HEK293 (cell line): ENCODE measurements at regions of chr9 and their contacts with region 1.

Region 1: GRCh38 chr9:127734747-127735529 is at the start of gene TOR2A:
- H3K4me3 ChIP-seq: peak within 1 kb of the TSS; percentile 70
- H3K27ac ChIP-seq: peak within 1 kb of the TSS; percentile 75
- H3K4me1 ChIP-seq: no peaks in the 10 kb centered on the region
- CTCF ChIP-seq: peak; percentile 93

Region 2: GRCh38 chr9:127450830-127451724 is 283.9 kb before region 1 on chr9 and contains the starts of genes LRSAM1 and RPL12:
- CTCF ChIA-PET with region 1: interaction called, 10 read pairs
- POLR2A ChIA-PET with region 1: interaction called, 4 read pairs
- H3K4me3 ChIP-seq: peak within 1 kb of the TSS; percentile 90
- H3K27ac ChIP-seq: peak within 1 kb of the TSS; percentile 98
- H3K4me1 ChIP-seq: no peaks in the 10 kb centered on the region
- CTCF ChIP-seq: no peak

Region 3: DNA sequence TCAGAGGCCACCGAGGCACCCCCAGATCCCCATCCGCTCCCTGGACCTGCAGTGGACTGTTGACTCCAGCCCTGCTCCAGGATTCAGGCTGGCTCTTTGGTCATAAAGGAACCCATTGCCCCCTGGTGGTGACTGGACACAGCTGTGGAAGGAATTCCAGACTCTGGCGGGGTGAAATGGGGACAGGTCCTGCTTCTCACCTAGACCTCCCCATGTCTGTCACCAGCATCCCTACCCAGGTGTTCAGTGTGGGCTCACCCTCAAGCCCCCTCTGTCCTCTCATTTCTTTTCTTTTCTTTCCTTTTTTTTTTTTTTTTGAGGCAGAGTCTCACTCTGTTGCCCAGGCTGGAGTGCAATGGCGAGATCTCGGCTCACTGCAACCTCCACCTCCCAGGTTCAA is 148.4 kb before region 1 on chr9:
- CTCF ChIA-PET with region 1: interaction called, 72 read pairs
- POLR2A ChIA-PET with region 1: interaction called, 11 read pairs
- H3K4me3 ChIP-seq: no peak overlapping the region
- H3K27ac ChIP-seq: no peak overlapping the region
- H3K4me1 ChIP-seq: no peaks in the 10 kb centered on the region
- CTCF ChIP-seq: peak; percentile 72; the same call in 1 of the 2 replicates

Region 4: GRCh38 chr9:127611899-127612790 is 122.8 kb before region 1 on chr9 and contains the start of gene STXBP1:
- CTCF ChIA-PET with region 1: interaction called, 10 read pairs
- POLR2A ChIA-PET with region 1: interaction called, 14 read pairs
- H3K4me3 ChIP-seq: peak within 1 kb of the TSS; percentile 78
- H3K27ac ChIP-seq: peak within 1 kb of the TSS; percentile 46; the same call in 1 of the 2 replicates
- H3K4me1 ChIP-seq: peaks cover 13% of the 10 kb centered on the region
- CTCF ChIP-seq: peak; percentile 43; the same call in 1 of the 2 replicates

Region 5: DNA sequence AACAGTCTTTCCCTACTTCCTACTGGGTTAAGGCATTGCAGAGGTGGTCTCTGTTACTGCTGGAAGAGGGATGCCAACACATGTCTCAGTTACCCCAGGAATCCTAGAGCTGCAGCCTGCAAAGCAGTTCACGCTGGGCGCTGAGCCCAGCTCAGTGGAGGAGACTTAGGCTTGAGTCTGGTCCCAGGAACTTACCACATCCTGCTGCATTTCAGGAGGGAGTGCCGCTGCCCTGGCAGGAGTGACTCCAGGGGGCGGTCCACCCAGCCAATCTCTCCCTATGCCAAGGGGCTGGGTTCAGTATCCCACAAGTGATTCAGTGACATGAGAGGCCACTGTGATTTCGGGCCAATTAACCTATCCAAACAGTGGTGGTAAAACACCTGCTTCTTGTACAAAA is 11.5 kb before region 1 on chr9:
- CTCF ChIA-PET with region 1: interaction called, 12 read pairs
- POLR2A ChIA-PET with region 1: interaction called, 3 read pairs
- H3K4me3 ChIP-seq: no peak overlapping the region
- H3K27ac ChIP-seq: no peak overlapping the region
- H3K4me1 ChIP-seq: no peaks in the 10 kb centered on the region
- CTCF ChIP-seq: no peak

Region 6: DNA sequence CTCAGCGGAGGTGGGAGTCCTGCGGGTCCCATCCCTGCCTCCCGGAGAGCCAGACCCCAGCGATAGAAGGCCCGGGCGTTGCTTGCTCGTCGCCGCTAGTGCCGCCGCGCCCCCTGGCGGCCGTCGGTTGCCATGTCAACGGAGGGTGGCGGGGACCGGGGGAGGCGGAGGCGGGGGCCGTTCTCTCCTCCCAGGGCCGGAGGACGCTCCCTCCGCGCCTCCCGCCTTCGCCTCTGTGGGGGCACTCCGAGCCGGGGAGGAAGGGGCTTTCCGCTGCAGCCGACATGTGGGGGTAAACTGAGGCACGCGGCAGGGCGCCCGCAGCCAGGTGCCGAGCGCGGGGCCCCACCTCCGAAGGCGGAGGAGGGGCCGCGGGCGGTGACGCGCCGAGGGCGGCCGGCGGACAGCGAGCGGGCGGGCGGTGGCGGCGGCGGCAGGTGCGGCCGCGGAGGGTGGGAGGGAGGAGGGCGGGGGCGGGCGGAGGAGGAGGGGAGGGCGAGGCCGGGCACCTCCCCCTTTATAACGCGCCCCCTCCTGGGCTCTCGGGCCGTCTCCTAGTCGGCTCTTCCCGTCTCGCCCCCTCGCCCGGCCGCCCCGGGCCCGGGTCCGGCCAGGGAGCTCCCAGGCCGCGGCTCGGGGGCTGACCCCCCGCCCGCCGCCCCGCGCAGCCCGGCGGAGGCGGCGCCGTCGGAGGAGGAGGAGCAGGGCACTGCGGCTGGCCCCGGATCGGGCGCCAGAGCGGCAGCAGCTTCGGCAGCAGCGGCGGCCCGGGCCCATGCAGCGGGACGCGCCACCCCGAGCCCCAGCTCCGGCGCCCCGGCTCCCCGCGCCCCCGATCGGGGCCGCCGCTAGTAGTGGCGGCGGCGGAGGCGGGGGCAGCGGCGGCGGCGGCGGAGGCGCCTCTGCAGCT is 50.3 kb after region 1 on chr9:
- CTCF ChIA-PET with region 1: interaction called, 44 read pairs
- POLR2A ChIA-PET with region 1: interaction called, 16 read pairs
- H3K4me3 ChIP-seq: peak overlapping the region; percentile 67
- H3K27ac ChIP-seq: peak overlapping the region; percentile 95
- H3K4me1 ChIP-seq: no peaks in the 10 kb centered on the region
- CTCF ChIP-seq: peak; percentile 67

Region 7: DNA sequence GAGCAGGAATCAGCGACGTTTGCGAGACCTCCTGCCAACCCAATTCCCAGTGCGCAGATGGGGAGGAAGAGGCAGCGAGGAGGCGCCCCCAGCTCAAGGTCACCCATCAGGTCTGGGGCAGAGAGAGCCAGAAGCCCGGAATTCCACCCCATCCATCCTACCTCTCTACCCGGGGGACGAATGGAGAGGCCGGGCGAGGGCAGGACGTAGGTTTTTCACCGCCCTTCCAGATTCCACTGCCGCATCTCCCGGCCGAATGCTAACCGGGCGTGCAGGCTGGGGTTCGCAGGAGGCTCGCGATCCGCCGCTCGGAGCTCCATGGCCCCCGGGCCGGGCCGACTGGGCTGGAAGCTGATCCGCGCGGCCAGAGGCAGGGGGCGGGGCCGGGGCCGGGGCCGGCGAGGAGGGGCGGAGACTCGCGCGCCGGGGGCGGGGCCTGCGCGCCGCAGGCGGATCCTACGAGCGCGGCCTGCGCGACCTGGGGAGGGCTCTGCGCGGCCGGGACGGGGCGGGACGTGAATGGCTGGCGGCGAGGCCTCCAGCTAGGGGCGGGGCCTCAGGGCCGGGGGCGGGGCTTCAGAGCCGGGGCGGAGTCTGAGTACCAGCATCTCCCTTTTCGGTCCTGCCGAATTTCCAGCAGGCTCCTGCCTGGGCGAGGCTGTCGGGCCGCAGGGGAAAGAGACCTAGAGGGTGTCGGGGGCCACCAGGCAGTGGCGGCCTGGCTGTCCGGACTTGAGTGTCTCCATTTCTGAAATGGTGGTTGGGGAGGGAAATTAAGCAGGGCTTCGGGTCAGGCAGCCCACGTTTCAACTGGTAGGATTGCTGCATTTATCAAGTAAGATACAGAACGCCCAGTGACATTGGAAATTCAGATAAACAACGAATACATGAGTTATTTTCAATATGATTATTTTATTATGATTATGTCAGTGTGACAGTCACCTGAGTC is 182.0 kb after region 1 on chr9 and contains the start of gene ST6GALNAC4:
- CTCF ChIA-PET with region 1: interaction called, 65 read pairs
- POLR2A ChIA-PET with region 1: interaction called, 6 read pairs
- H3K4me3 ChIP-seq: peak within 1 kb of the TSS; percentile 43
- H3K27ac ChIP-seq: no peak within 1 kb of the TSS
- H3K4me1 ChIP-seq: peaks cover 3% of the 10 kb centered on the region; the same call in 1 of the 2 replicates
- CTCF ChIP-seq: no peak